ENCODE measurements at regions of chr20 and their contacts with region 1.

Region 1: GRCh38 chr20:46590452-46590851 is 40.0 kb upstream of the OCSTAMP start:
- H3K4me3 Mint-ChIP-seq: no peak overlapping the region
- H3K27ac Mint-ChIP-seq: no peak overlapping the region
- H3K4me1 Mint-ChIP-seq: no peaks in the 10 kb centered on the region
- H3K27me3 Mint-ChIP-seq: peaks cover 13% of the 10 kb centered on the region

Region 2: DNA sequence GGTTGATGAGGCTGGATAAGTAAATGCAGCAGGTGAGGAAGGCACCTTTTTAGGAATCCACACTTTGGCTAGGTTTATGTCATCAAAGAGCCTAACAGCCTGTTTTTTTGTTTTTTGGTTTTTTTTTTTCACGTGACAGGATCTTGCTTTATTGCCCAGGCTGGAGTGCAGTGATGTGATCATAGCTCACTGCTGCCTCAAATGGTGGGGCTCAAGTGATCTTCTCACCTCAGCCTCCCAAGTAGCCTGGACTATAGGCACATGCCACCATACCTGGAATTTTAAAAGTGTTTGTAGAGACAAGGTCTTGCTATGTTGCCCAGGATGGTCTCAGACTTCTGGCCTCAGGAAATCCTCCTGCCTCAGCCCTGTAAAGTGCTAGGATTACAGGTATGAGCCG is 113.2 kb before region 1 on chr20:
- intact Hi-C with region 1: no loop called
- H3K4me3 Mint-ChIP-seq: no peak overlapping the region
- H3K27ac Mint-ChIP-seq: no peak overlapping the region
- H3K4me1 Mint-ChIP-seq: no peaks in the 10 kb centered on the region
- H3K27me3 Mint-ChIP-seq: peaks cover 8% of the 10 kb centered on the region

Region 3: GRCh38 chr20:46545077-46545826 is 45.2 kb before region 1 on chr20:
- intact Hi-C with region 1: loop called (anchors 2 kb)
- H3K4me3 Mint-ChIP-seq: no peak overlapping the region
- H3K27ac Mint-ChIP-seq: no peak overlapping the region
- H3K4me1 Mint-ChIP-seq: no peaks in the 10 kb centered on the region
- H3K27me3 Mint-ChIP-seq: peaks cover 35% of the 10 kb centered on the region

Region 4: GRCh38 chr20:46604551-46605133 is 14.2 kb after region 1 on chr20:
- intact Hi-C with region 1: no loop called
- H3K4me3 Mint-ChIP-seq: no peak overlapping the region
- H3K27ac Mint-ChIP-seq: no peak overlapping the region
- H3K4me1 Mint-ChIP-seq: peaks cover 5% of the 10 kb centered on the region
- H3K27me3 Mint-ChIP-seq: peaks cover 10% of the 10 kb centered on the region

Region 5: DNA sequence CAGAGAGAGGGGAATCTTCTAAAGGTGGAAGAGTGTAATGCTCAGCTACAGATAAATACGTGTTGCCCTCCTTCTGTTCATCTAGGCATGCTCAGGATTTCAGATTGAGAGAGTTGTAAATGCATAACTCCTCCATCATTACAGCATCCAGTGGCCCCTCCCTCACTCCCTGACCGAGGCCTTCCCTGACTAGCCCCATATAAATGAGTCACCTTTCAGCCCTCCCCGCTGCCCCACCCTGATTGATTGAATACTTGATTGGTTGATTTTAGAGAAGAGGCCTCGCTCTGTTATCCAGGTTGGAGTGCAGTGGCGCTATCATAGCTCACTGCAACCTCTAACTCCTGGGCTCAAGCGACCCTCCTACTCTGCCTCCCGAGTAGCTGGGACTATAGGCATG is 497.9 kb after region 1 on chr20:
- intact Hi-C with region 1: no loop called
- H3K4me3 Mint-ChIP-seq: no peak overlapping the region
- H3K27ac Mint-ChIP-seq: no peak overlapping the region
- H3K4me1 Mint-ChIP-seq: no peaks in the 10 kb centered on the region
- H3K27me3 Mint-ChIP-seq: peaks cover 36% of the 10 kb centered on the region